A549 (cell line): ENCODE measurements at regions of chr17 and their contacts with region 1.

Region 1: DNA sequence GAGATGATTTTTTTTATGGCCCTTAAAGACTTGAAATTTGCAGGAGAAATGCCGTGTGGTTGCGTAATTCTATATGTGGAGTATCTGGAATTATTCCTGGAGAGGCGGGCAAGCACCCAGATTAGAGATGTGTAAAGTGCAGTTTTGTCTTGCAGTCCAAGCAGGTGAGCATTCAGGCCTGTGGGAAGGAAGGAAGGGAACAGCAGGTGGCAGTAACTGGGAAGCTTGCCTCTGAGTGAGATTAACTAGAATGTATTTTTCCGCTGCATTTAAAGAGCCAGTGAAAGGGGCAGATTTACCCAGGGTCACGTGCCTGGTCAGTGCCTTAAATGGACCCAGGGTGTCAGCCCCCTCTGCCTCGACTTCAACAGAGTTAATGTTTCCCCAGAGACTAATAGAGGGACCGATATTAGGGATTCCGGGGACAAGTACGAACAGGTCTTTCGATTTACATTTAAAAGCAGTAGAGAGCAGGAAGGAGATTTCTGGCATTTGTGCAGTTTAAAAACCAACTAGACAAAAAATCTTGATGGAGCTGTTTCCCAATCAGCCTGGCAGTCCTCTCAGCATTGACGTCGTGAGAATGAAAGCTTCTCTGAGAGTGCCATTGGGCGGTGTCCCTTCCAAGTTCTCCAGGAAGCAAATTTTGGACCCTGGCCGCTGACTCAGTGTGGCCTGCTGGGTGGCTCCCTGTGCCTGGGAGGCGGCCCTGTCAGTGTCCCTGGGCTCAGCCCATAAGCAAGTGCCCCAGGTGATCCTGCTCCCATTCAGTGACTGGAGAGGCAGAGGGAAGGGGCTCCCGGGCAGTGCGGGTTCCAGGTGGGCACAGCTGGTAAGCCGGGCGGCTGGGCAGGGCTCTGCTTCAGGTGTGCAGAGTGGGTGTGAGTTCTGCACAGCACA is 38.2 kb downstream of the KSR1 start:
- DNase-seq: peak; percentile 71 to 83
- ATAC-seq: peak; percentile 80 to 83
- H3K4me3 ChIP-seq: peak overlapping the region; percentile 24
- H3K27ac ChIP-seq: peak overlapping the region; percentile 84 to 89
- H3K4me1 ChIP-seq: peaks cover 65% of the 10 kb centered on the region
- CTCF ChIP-seq: peak; percentile 82
- EP300 ChIP-seq: no peak
- POLR2A ChIP-seq: no peak
- RAD21 ChIP-seq: peak; percentile 83 to 88

Region 2: DNA sequence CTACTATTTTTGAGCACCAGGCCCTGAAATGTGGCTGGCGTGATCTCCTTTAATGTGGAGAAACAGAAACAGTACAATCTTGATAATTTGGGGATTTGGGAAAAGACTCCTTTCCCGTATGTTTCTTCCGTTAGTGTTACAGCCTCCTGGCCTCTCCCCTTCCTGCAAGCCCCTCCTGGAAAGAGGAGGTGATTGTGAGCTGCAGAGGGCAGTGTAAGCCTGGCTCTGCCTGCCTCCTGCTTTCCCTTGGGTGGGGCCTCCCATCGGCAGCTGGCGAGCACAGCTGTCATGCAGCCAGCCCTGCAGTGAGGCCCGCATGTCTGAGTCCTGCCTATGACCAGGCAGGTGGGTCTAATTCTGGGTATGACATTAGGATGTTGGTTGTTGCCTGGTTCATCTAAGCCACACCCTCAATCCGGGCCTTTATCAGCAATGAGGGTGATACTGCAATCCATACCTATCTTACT is 249.2 kb before region 1 on chr17:
- CTCF ChIA-PET with region 1: no interaction called
- POLR2A ChIA-PET with region 1: no interaction called
- DNase-seq: peak; percentile 90 to 95
- ATAC-seq: peak; percentile 87 to 95
- H3K4me3 ChIP-seq: no peak overlapping the region
- H3K27ac ChIP-seq: peak overlapping the region; percentile 72 to 85
- H3K4me1 ChIP-seq: peaks cover 61% of the 10 kb centered on the region
- CTCF ChIP-seq: peak; percentile 87
- EP300 ChIP-seq: no peak
- POLR2A ChIP-seq: no peak
- RAD21 ChIP-seq: peak; percentile 96 to 99

Region 3: GRCh38 chr17:27293898-27294688 is 200.3 kb before region 1 on chr17 and contains the start of gene WSB1:
- CTCF ChIA-PET with region 1: no interaction called
- POLR2A ChIA-PET with region 1: no interaction called
- DNase-seq: peak; percentile 92 to 94
- ATAC-seq: peak; percentile 87 to 89
- H3K4me3 ChIP-seq: peak within 1 kb of the TSS; percentile 71
- H3K27ac ChIP-seq: peak within 1 kb of the TSS; percentile 88 to 94
- H3K4me1 ChIP-seq: peaks cover 25% of the 10 kb centered on the region
- CTCF ChIP-seq: no peak
- EP300 ChIP-seq: no peak
- POLR2A ChIP-seq: peak; percentile 98
- RAD21 ChIP-seq: peak in 1 of 2 experiments; percentile 18; a peak in 1 of 5 replicates
- polyA plus RNA-seq, gene WSB1: 107 and 111 TPM in 2 replicates

Region 4: DNA sequence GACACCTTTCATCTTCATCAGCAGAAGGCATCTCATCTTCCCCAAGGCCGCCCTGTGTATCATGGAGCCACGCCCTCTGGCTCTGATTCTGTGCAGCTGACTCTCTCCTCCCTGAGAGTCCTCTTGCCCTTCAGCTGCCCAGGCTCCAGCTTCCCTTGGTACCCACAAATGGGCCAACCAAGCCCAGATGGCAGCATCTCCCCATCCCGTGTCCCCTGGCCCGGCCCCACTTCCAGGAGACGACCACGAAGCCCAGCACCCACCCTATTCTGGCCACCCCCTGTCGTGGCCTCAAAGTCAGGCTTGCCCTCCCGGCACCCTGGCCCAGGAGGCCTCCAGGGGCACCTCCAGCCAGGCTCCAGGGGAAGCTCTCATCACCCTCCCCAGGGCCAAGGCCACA is 69.5 kb before region 1 on chr17:
- CTCF ChIA-PET with region 1: no interaction called
- POLR2A ChIA-PET with region 1: no interaction called
- DNase-seq: no peak
- ATAC-seq: no peak
- H3K4me3 ChIP-seq: no peak overlapping the region
- H3K27ac ChIP-seq: no peak overlapping the region
- H3K4me1 ChIP-seq: no peaks in the 10 kb centered on the region
- CTCF ChIP-seq: no peak
- EP300 ChIP-seq: no peak
- POLR2A ChIP-seq: no peak
- RAD21 ChIP-seq: no peak

Region 5: GRCh38 chr17:27473748-27474609 is 20.5 kb before region 1 on chr17:
- CTCF ChIA-PET with region 1: interaction called, 19 read pairs
- POLR2A ChIA-PET with region 1: no interaction called
- DNase-seq: no peak
- ATAC-seq: no peak
- H3K4me3 ChIP-seq: no peak overlapping the region
- H3K27ac ChIP-seq: peak overlapping the region in 1 of 2 experiments; percentile 66; a peak in 4 of 6 replicates
- H3K4me1 ChIP-seq: peaks cover 38% of the 10 kb centered on the region
- CTCF ChIP-seq: no peak
- EP300 ChIP-seq: no peak
- POLR2A ChIP-seq: no peak
- RAD21 ChIP-seq: no peak

Region 6: GRCh38 chr17:27513849-27514248 is 19.4 kb after region 1 on chr17:
- CTCF ChIA-PET with region 1: interaction called, 30 read pairs
- POLR2A ChIA-PET with region 1: no interaction called
- DNase-seq: no peak
- ATAC-seq: no peak
- H3K4me3 ChIP-seq: no peak overlapping the region
- H3K27ac ChIP-seq: no peak overlapping the region
- H3K4me1 ChIP-seq: peaks cover 8% of the 10 kb centered on the region; the same call in 2 of the 3 replicates
- CTCF ChIP-seq: no peak
- EP300 ChIP-seq: no peak
- POLR2A ChIP-seq: no peak
- RAD21 ChIP-seq: no peak

Region 7: GRCh38 chr17:27532269-27533263 is 38.1 kb after region 1 on chr17:
- CTCF ChIA-PET with region 1: interaction called, 15 read pairs
- POLR2A ChIA-PET with region 1: no interaction called
- DNase-seq: no peak
- ATAC-seq: no peak
- H3K4me3 ChIP-seq: no peak overlapping the region
- H3K27ac ChIP-seq: peak overlapping the region; percentile 70 to 84
- H3K4me1 ChIP-seq: peaks cover 95% of the 10 kb centered on the region
- CTCF ChIP-seq: no peak
- EP300 ChIP-seq: no peak
- POLR2A ChIP-seq: no peak
- RAD21 ChIP-seq: no peak

Region 8: DNA sequence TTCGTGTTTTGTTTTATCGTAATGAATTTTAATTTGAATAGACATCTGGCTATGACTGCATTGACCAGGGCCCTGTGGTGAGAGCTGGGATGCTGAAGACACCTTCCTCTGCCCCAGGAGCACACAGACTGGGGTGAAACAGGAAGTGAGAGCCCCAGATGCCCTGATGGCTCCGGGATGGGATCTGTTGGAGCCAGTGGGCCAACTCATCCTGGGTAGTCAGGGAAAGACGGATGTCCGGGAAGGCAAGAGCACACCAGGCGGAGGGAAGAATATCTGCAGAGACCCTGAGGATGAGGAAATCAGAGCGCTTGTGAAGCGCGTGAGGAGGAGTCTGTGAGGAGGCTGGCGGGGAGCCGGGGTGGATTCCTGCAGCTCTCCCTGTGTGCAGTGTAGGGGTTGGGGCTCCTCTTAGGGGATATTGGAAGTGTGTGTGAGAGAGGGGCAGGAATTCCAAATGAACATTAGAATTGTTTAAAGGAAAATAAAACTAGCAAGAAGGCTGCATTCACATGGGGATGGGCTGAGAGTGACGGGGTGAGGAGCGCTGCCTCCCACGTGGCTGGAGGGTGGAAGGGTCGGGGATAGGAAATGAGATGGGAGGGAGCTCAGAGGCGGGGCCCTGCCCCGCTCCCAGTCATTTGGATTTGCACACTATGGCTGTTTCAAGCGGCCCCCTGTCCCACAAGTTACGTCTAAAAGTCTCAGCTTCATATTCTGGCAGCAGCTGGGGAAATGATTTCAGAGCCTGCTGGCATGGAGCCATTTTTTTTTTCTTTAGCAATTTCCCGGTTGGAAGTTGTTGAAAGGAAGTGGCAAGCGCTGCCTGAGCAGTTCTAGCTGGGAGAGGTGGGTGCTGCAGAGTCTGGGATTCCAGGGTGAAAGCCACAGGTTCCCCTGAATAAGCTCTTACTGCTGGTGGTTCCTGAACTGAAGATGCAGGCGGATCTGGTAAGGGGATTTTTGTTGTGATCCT is 65.4 kb after region 1 on chr17:
- CTCF ChIA-PET with region 1: interaction called, 15 read pairs
- POLR2A ChIA-PET with region 1: no interaction called
- DNase-seq: peak in 1 of 2 experiments; percentile 60
- ATAC-seq: peak; percentile 36 to 53; a peak in 4 of 6 replicates
- H3K4me3 ChIP-seq: no peak overlapping the region
- H3K27ac ChIP-seq: peak overlapping the region; percentile 67 to 84
- H3K4me1 ChIP-seq: peaks cover 43% of the 10 kb centered on the region
- CTCF ChIP-seq: no peak
- EP300 ChIP-seq: no peak
- POLR2A ChIP-seq: no peak
- RAD21 ChIP-seq: peak in 1 of 2 experiments; percentile 21; a peak in 1 of 5 replicates

Region 9: DNA sequence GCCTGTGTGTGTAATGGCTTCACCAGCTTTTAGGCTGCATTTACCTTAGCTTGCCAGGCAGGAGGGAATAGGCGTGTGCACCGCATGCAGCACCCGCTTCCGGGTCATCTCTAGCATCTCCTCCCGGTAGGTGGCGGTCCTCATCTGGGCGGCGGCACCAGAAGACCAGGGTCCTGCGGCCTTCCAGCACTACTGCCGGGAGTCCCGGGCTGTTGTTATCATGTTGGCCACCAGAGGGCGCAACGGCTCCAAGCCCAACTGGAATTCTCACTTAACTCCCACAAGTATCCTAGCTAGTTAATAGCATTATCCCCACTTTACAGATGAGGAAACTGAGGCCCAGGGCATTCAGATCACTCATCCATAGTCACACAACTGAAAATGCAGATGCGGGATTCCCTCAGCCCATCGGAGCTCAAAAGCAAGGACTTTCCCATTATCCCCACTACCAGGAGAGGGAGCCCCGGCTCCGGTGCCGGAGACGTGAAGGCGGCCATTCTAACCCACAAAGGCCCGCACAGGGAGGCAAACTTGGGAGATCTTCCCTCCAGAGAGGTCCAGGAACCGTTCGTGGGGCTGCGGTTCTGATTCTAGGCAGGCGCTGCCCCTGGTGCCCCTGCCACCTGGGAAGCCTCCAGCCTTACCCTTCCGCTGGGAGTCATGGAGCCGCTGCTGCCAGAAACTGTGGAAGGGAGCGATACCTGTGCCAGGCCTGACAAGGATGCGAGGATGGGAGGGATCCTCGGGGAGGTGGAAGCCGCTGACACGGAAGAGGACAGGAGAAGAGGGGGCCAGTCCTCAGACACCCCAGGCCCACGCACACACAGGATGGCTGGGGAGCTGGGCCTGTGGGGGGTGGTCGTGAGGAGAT is 160.4 kb after region 1 on chr17:
- CTCF ChIA-PET with region 1: interaction called, 10 read pairs
- POLR2A ChIA-PET with region 1: no interaction called
- DNase-seq: peak; percentile 92 to 94
- ATAC-seq: peak; percentile 79 to 97
- H3K4me3 ChIP-seq: no peak overlapping the region
- H3K27ac ChIP-seq: peak overlapping the region in 1 of 2 experiments; percentile 35; a peak in 1 of 6 replicates
- H3K4me1 ChIP-seq: no peaks in the 10 kb centered on the region
- CTCF ChIP-seq: peak; percentile 100
- EP300 ChIP-seq: no peak
- POLR2A ChIP-seq: no peak
- RAD21 ChIP-seq: peak; percentile 68 to 88

Region 10: DNA sequence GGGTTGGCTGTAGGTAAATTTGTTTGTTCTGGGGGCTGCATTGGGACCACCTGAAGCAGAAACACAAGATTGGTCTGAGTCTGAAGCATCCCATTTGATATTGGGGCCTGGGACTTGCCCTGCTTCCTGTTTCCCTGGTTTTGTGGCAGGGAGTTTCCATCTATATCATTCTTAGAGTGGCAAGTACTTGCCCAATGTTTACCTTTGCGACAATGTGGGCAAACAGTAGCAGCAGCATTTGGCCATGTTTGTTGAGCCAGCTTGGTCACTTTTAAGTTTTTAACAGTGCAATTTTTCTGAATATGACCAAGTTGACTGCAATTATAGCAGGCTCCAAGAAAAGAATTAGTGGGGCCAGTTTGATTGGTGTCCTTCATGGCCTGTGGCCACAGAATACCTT is 198.3 kb after region 1 on chr17:
- CTCF ChIA-PET with region 1: no interaction called
- POLR2A ChIA-PET with region 1: no interaction called
- DNase-seq: no peak
- ATAC-seq: no peak
- H3K4me3 ChIP-seq: no peak overlapping the region
- H3K27ac ChIP-seq: no peak overlapping the region
- H3K4me1 ChIP-seq: peaks cover 7% of the 10 kb centered on the region; the same call in 1 of the 3 replicates
- CTCF ChIP-seq: no peak
- EP300 ChIP-seq: no peak
- POLR2A ChIP-seq: no peak
- RAD21 ChIP-seq: no peak